ENCODE measurements at regions of chr9 and their contacts with region 1.

Region 1: DNA sequence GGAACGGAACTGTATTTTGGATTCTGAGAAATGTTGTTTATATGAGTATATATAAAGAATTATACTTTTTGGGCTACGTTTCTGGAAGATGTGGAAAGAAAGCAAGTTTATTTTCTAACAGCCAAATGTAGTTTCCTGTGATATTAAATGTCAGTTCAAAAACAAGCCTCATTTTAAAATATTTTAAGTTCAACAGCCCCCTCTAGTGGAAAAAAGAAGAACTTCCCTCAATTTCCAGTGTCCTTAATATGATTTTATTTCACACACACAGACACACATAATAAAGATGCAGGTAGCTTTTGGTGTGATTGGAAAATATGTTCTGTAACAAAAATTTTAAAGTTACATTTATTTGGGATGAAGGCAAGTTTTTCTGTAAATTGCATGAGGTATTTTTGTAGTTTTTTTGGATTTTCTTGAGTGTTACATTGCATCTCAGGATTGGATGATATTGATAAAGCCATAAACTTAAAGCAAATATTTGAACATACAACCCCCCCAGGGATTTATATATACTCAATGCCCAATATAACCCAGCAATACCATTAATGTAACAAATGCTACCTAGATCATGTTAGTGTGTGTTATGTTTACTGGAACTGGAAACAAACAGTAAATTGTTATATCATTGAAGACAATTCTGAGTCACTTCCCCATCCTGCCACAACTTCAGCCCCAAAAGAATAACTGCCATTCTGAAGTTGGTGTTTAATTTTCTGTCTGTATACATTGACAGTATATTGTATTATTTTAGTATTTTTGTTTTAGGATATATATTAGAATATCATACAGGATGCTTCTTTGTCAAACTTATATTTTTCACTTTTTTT is 54.0 kb downstream of the CCDC171 start:
- DNase-seq: no peak
- H3K4me3 ChIP-seq: no peak overlapping the region
- H3K27ac ChIP-seq: no peak overlapping the region
- H3K4me1 ChIP-seq: no peaks in the 10 kb centered on the region
- H3K27me3 ChIP-seq: no peaks in the 10 kb centered on the region
- CTCF ChIP-seq: peak; percentile 44 to 60 (median 46)
- EP300 ChIP-seq: no peak
- POLR2A ChIP-seq: no peak

Region 2: GRCh38 chr9:15357050-15357653 is 249.7 kb before region 1 on chr9:
- intact Hi-C with region 1: loop called in 1 of 4 experiments (anchors 10 kb)
- DNase-seq: no peak
- H3K4me3 ChIP-seq: no peak overlapping the region
- H3K27ac ChIP-seq: no peak overlapping the region
- H3K4me1 ChIP-seq: no peaks in the 10 kb centered on the region
- H3K27me3 ChIP-seq: no peaks in the 10 kb centered on the region
- CTCF ChIP-seq: no peak
- EP300 ChIP-seq: no peak
- POLR2A ChIP-seq: no peak

Region 3: GRCh38 chr9:15422372-15423230 is 184.3 kb before region 1 on chr9 and contains the start of gene SNAPC3:
- intact Hi-C with region 1: loop called in 1 of 4 experiments (anchors 10 kb)
- DNase-seq: peak; percentile 89 to 94 (median 93)
- H3K4me3 ChIP-seq: peak within 1 kb of the TSS; percentile 80
- H3K27ac ChIP-seq: peak within 1 kb of the TSS; percentile 47 to 90
- H3K4me1 ChIP-seq: peaks cover 3% of the 10 kb centered on the region
- H3K27me3 ChIP-seq: no peaks in the 10 kb centered on the region
- CTCF ChIP-seq: no peak
- EP300 ChIP-seq: peak; percentile 74
- POLR2A ChIP-seq: peak; percentile 39
- total RNA-seq, gene SNAPC3: 18.8 to 32.3 (median 26.2) TPM